SK-N-SH (cell line): ENCODE measurements at regions of chr11 and their contacts with region 1.

Region 1: GRCh38 chr11:113289431-113290187 is 24.8 kb upstream of the TTC12 start:
- DNase-seq: peak; percentile 83
- H3K4me3 ChIP-seq: no peak overlapping the region; a peak in 1 of 4 replicates
- H3K27ac ChIP-seq: no peak overlapping the region
- H3K4me1 ChIP-seq: peaks cover 0 to 8% of the 10 kb centered on the region in 2 experiments; a peak in 2 of 4 replicates
- H3K27me3 ChIP-seq: no peaks in the 10 kb centered on the region
- CTCF ChIP-seq: peak; percentile 93
- EP300 ChIP-seq: no peak
- RAD21 ChIP-seq: peak; percentile 100

Region 2: GRCh38 chr11:112280268-112281126 is 1009.1 kb before region 1 on chr11:
- CTCF ChIA-PET with region 1: interaction called, 34 read pairs
- POLR2A ChIA-PET with region 1: no interaction called
- DNase-seq: peak; percentile 85
- H3K4me3 ChIP-seq: peak overlapping the region; percentile 53 to 61
- H3K27ac ChIP-seq: peak overlapping the region in 1 of 2 experiments; percentile 53; a peak in 1 of 4 replicates
- H3K4me1 ChIP-seq: peaks cover 4 to 8% of the 10 kb centered on the region in 2 experiments; a peak in 3 of 4 replicates
- H3K27me3 ChIP-seq: no peaks in the 10 kb centered on the region
- CTCF ChIP-seq: peak; percentile 81
- EP300 ChIP-seq: no peak
- RAD21 ChIP-seq: peak; percentile 93

Region 3: DNA sequence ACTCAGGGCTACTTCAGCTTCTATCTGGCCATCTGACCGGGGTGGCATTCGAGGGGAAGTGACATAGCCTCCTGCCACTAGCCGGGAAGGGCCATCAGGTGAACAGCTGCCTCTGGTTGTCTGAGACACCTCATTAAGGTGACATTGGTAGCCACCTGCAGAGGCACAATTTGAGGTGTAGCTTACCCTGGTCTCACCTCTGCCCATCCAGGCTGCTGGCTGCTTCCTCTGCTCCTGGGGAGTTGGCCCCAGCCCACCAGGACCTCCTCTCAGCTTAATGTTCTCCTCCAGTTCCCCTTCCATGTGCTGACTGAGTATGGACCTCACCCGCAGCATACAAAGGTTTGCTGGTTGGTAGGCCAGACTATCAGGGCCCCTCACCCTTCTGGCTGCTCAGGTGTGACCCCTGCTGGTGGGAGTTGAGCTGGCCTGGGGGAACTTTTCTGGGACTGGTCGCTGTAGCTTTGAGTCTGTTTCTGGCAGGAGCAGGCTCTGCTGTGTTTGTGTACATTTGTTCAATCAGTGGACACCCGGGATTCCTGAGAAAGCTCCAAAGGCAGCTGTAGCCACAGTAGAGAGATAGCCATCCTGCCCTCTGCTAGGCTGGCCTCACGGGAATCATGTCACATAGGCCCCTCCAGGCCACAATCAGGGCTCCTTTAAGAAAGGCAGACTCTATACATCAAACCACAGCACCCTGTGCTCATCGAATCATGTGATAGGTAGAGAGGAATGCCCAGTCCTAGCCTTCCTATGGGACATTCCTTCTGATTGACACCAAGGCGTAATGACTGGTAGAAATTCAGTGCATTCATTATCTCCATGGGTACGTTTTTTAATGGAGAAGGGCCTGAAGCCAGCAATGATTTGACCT is 733.9 kb before region 1 on chr11:
- CTCF ChIA-PET with region 1: interaction called, 12 read pairs
- POLR2A ChIA-PET with region 1: no interaction called
- DNase-seq: peak; percentile 66
- H3K4me3 ChIP-seq: no peak overlapping the region
- H3K27ac ChIP-seq: no peak overlapping the region
- H3K4me1 ChIP-seq: no peaks in the 10 kb centered on the region; a peak in 2 of 4 replicates
- H3K27me3 ChIP-seq: no peaks in the 10 kb centered on the region
- CTCF ChIP-seq: peak; percentile 63
- EP300 ChIP-seq: no peak
- RAD21 ChIP-seq: peak; percentile 69

Region 4: GRCh38 chr11:112837162-112837826 is 452.3 kb before region 1 on chr11:
- CTCF ChIA-PET with region 1: interaction called, 11 read pairs
- POLR2A ChIA-PET with region 1: interaction called, 3 read pairs
- DNase-seq: peak; percentile 33
- H3K4me3 ChIP-seq: no peak overlapping the region
- H3K27ac ChIP-seq: peak overlapping the region in 1 of 2 experiments; percentile 97; a peak in 2 of 4 replicates
- H3K4me1 ChIP-seq: peaks cover 18 to 52% of the 10 kb centered on the region in 2 experiments
- H3K27me3 ChIP-seq: no peaks in the 10 kb centered on the region
- CTCF ChIP-seq: peak; percentile 23; the same call in 1 of the 2 replicates
- EP300 ChIP-seq: no peak
- RAD21 ChIP-seq: peak; percentile 57

Region 5: GRCh38 chr11:113113801-113114706 is 175.6 kb before region 1 on chr11:
- CTCF ChIA-PET with region 1: interaction called, 44 read pairs
- POLR2A ChIA-PET with region 1: no interaction called
- DNase-seq: peak; percentile 49
- H3K4me3 ChIP-seq: no peak overlapping the region
- H3K27ac ChIP-seq: peak overlapping the region in 1 of 2 experiments; percentile 22; a peak in 2 of 4 replicates
- H3K4me1 ChIP-seq: peaks cover 6 to 20% of the 10 kb centered on the region in 2 experiments; a peak in 2 of 4 replicates
- H3K27me3 ChIP-seq: no peaks in the 10 kb centered on the region
- CTCF ChIP-seq: peak; percentile 81
- EP300 ChIP-seq: no peak
- RAD21 ChIP-seq: peak; percentile 92

Region 6: GRCh38 chr11:113267493-113267892 is 22.1 kb before region 1 on chr11:
- CTCF ChIA-PET with region 1: interaction called, 38 read pairs
- POLR2A ChIA-PET with region 1: no interaction called
- DNase-seq: no peak
- H3K4me3 ChIP-seq: no peak overlapping the region
- H3K27ac ChIP-seq: no peak overlapping the region
- H3K4me1 ChIP-seq: peaks cover 0 to 7% of the 10 kb centered on the region in 2 experiments; a peak in 1 of 4 replicates
- H3K27me3 ChIP-seq: no peaks in the 10 kb centered on the region
- CTCF ChIP-seq: no peak
- EP300 ChIP-seq: no peak
- RAD21 ChIP-seq: no peak